CD8-positive, alpha-beta T cell (primary cell): ENCODE measurements at regions of chr5 and their contacts with region 1.

Region 1: GRCh38 chr5:127229185-127229889 is 61.3 kb upstream of the MEGF10 start:
- DNase-seq: peak; percentile 9 to 82 (median 47)
- ATAC-seq: peak; percentile 84
- H3K4me3 ChIP-seq: peak overlapping the region; percentile 62 to 83
- H3K4me3 Mint-ChIP-seq: peak overlapping the region; percentile 84
- H3K27ac ChIP-seq: peak overlapping the region; percentile 62
- H3K27ac Mint-ChIP-seq: peak overlapping the region; percentile 89
- H3K4me1 ChIP-seq: peaks cover 8% of the 10 kb centered on the region
- H3K4me1 Mint-ChIP-seq: peaks cover 15% of the 10 kb centered on the region
- H3K27me3 ChIP-seq: no peaks in the 10 kb centered on the region
- H3K27me3 Mint-ChIP-seq: no peaks in the 10 kb centered on the region
- CTCF ChIP-seq: no peak

Region 2: GRCh38 chr5:126680191-126680817 is 549.0 kb before region 1 on chr5:
- CTCF ChIA-PET with region 1: no interaction called
- POLR2A ChIA-PET with region 1: no interaction called
- intact Hi-C with region 1: no loop called
- DNase-seq: no peak
- ATAC-seq: no peak
- H3K4me3 ChIP-seq: no peak overlapping the region
- H3K4me3 Mint-ChIP-seq: no peak overlapping the region
- H3K27ac ChIP-seq: no peak overlapping the region
- H3K27ac Mint-ChIP-seq: no peak overlapping the region
- H3K4me1 ChIP-seq: no peaks in the 10 kb centered on the region
- H3K4me1 Mint-ChIP-seq: peaks cover 8% of the 10 kb centered on the region
- H3K27me3 ChIP-seq: no peaks in the 10 kb centered on the region
- H3K27me3 Mint-ChIP-seq: peaks cover 2% of the 10 kb centered on the region
- CTCF ChIP-seq: no peak

Region 3: DNA sequence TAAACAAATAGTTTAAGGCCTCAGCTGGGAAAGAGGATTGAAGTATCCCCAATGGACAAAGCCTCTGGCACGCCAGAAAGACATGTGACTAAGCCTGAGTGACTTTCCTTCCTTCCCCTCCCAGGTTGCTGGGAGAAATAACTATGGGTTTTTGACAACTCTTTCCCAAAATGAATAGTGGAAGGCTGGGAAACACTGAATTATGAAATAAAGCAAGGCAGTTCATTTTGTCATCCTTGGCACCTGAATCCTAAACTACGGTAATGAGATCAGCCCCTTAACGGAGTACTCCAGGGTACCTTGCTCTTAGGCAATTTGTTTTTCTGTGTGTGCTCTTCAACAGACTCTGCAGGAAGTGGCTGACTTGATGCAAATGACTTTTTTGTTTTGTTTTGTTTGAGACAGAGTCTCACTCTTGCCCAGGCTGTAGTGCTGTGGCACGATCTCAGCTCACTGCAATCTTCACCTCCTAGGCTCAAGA is 377.2 kb before region 1 on chr5:
- CTCF ChIA-PET with region 1: no interaction called
- POLR2A ChIA-PET with region 1: interaction called, 10 read pairs
- intact Hi-C with region 1: loop called in 1 of 2 experiments (anchors 5 kb)
- DNase-seq: peak in 5 of 9 experiments; percentile 19 to 65 (median 48)
- ATAC-seq: peak; percentile 70
- H3K4me3 ChIP-seq: peak overlapping the region; percentile 1 to 47
- H3K4me3 Mint-ChIP-seq: peak overlapping the region; percentile 88
- H3K27ac ChIP-seq: peak overlapping the region; percentile 56 to 59
- H3K27ac Mint-ChIP-seq: peak overlapping the region; percentile 98
- H3K4me1 ChIP-seq: peaks cover 38% of the 10 kb centered on the region
- H3K4me1 Mint-ChIP-seq: peaks cover 70% of the 10 kb centered on the region
- H3K27me3 ChIP-seq: no peaks in the 10 kb centered on the region
- H3K27me3 Mint-ChIP-seq: no peaks in the 10 kb centered on the region
- CTCF ChIP-seq: no peak

Region 4: DNA sequence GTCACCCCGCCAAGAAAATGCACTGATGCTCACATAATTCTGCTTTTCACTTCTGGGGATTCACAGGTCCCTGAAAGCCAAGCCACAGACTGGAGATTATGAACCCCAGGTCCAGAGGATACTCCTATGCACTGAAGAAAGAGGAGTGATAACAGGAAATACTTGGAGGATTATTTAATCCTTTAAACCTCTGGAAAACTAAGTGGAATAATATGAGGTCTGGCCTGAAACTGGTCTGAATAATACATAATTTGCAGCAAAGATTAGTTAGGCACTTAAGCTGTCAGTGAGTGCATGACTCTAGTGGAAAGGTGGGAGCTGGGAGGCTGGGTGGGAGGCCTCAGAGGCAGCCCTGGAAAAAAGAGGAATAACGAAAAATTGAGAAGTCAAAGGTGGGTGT is 244.7 kb before region 1 on chr5:
- CTCF ChIA-PET with region 1: no interaction called
- POLR2A ChIA-PET with region 1: no interaction called
- intact Hi-C with region 1: no loop called
- DNase-seq: no peak
- ATAC-seq: no peak
- H3K4me3 ChIP-seq: no peak overlapping the region
- H3K4me3 Mint-ChIP-seq: no peak overlapping the region
- H3K27ac ChIP-seq: no peak overlapping the region
- H3K27ac Mint-ChIP-seq: peak overlapping the region; percentile 21
- H3K4me1 ChIP-seq: peaks cover 21% of the 10 kb centered on the region
- H3K4me1 Mint-ChIP-seq: peaks cover 42% of the 10 kb centered on the region
- H3K27me3 ChIP-seq: no peaks in the 10 kb centered on the region
- H3K27me3 Mint-ChIP-seq: no peaks in the 10 kb centered on the region
- CTCF ChIP-seq: no peak

Region 5: DNA sequence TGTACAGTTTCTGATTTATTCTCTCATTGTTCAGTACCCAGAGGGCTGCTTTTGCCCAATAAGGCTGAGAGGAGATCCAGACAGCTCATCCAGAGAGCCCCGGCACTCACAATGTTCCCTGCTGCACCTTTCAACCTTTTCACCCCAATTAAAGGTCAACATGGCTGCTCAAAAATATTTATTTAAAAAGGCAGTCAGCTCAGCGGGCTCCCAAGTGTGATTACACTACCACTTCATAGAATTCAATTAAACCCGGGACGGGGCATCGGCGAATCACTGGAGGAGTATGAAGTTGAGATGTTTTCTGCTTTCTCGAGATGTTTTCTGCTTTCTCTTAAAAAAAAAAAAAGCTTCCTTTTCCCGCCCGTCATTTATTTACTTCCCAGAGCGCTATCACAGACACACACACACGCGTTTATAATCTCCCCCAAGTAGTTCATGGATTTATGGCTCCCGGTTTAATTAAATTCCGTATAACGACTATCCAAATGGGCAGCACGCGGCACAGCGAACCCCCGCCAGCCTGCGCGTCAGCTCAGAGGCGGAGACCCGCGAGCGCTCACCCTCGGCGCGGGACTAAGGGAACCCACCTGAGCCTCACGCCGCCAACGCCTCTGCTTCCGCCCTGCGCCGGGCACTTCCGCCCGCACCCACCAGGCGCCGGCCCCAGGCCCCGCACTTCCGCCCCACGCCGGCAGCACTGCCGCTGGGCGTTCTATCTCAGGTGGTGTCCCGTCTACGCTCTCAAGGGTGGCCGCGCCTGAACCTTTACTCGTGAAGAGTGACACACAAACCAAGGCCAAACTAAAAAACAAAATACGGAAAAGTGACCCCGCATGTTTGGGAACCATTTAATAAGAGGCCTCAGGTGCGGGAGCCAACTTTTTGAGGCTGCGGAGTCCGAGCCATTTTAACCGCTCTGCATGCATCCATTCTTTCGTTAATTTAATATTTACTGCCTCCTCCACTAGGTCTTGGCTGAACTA is 156.2 kb before region 1 on chr5 and contains the start of gene C5orf63:
- CTCF ChIA-PET with region 1: no interaction called
- POLR2A ChIA-PET with region 1: interaction called, 6 read pairs
- intact Hi-C with region 1: loop called in 1 of 2 experiments (anchors 1 kb)
- DNase-seq: peak; percentile 45 to 84 (median 59)
- ATAC-seq: peak; percentile 93
- H3K4me3 ChIP-seq: peak within 1 kb of the TSS; percentile 67 to 73
- H3K4me3 Mint-ChIP-seq: peak within 1 kb of the TSS; percentile 89
- H3K27ac ChIP-seq: peak within 1 kb of the TSS; percentile 62 to 68
- H3K27ac Mint-ChIP-seq: peak within 1 kb of the TSS; percentile 96
- H3K4me1 ChIP-seq: peaks cover 5% of the 10 kb centered on the region
- H3K4me1 Mint-ChIP-seq: peaks cover 26% of the 10 kb centered on the region
- H3K27me3 ChIP-seq: no peaks in the 10 kb centered on the region
- H3K27me3 Mint-ChIP-seq: no peaks in the 10 kb centered on the region
- CTCF ChIP-seq: no peak
- total RNA-seq, gene C5orf63: 4.8 TPM

Region 6: DNA sequence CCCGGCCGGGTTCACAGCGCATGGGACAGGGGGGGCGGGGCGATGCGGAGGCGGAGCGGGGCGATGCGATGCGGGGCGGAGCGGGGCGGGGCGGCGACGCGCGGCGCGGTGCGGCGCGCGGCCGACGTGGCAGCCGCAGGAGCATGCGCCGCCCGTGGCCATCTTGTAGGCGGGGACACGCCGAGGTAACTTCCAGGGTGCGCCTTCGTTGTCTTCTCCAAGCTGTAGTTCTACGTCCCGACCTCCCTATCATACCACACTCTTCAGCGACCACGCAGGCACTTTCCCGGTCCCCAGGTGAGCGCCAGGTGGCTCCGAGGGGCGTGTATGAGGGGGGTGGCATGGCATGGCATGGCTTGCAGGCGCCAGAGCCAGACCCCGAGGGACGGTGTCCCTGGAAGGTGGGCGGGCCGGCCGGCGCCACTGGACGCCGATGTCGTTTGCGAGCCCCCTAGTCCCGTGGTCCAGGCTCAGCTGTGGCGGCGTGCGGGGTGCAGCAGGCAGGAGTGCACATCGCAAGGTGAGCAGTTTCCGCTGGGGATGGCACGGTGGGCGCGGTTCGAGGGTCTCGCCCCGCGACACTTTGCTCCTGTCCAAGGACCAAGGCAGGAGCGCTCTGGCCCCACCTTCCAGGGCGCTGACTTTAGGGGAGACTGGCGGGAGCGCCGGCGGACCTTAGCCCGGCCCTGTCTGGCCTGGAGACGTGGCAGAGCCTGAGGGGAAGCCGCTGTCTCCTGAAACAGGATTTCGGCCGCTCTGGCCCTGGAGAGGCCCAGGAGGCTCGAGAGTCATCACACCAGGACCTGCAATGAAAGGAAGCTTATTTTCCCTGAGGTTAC is 288.4 kb after region 1 on chr5 and contains the start of gene PRRC1:
- CTCF ChIA-PET with region 1: no interaction called
- POLR2A ChIA-PET with region 1: no interaction called
- intact Hi-C with region 1: loop called in 1 of 2 experiments (anchors 5 kb)
- DNase-seq: peak; percentile 53 to 90 (median 81)
- ATAC-seq: peak; percentile 96
- H3K4me3 ChIP-seq: peak within 1 kb of the TSS; percentile 91 to 98
- H3K4me3 Mint-ChIP-seq: peak within 1 kb of the TSS; percentile 90
- H3K27ac ChIP-seq: peak within 1 kb of the TSS; percentile 75 to 76
- H3K27ac Mint-ChIP-seq: peak within 1 kb of the TSS; percentile 80
- H3K4me1 ChIP-seq: peaks cover 11% of the 10 kb centered on the region
- H3K4me1 Mint-ChIP-seq: peaks cover 37% of the 10 kb centered on the region
- H3K27me3 ChIP-seq: no peaks in the 10 kb centered on the region
- H3K27me3 Mint-ChIP-seq: peaks cover 8% of the 10 kb centered on the region
- CTCF ChIP-seq: no peak
- total RNA-seq, gene PRRC1: 30.4 to 37.3 TPM